Sigmoid colon (tissue), 7 donors: ENCODE measurements at regions of chr6 and their contacts with region 1.

Region 1: GRCh38 chr6:24494821-24495795 is at the start of gene ALDH5A1:
- DNase-seq: peak; percentile 83
- H3K4me3 ChIP-seq: peak within 1 kb of the TSS; percentile 53 to 67 (median 66)
- H3K27ac ChIP-seq: peak within 1 kb of the TSS; percentile 82 to 89 (median 85)
- H3K4me1 ChIP-seq: peaks cover 0 to 19% (median 12%) of the 10 kb centered on the region in 4 donors
- H3K27me3 ChIP-seq: no peaks in the 10 kb centered on the region
- CTCF ChIP-seq: peak in 2 of 4 experiments; percentile 6 to 18
- EP300 ChIP-seq: no peak
- POLR2A ChIP-seq: no peak
- total RNA-seq, gene ALDH5A1: 2.6 to 5.0 (median 2.9) TPM

Region 2: GRCh38 chr6:24666641-24667377 is 171.7 kb after region 1 on chr6 and contains the starts of genes ACOT13 and TDP2:
- intact Hi-C with region 1: loop called (anchors 10 kb)
- DNase-seq: peak; percentile 98
- H3K4me3 ChIP-seq: peak within 1 kb of the TSS; percentile 76 to 97 (median 80)
- H3K27ac ChIP-seq: peak within 1 kb of the TSS; percentile 88 to 92 (median 92)
- H3K4me1 ChIP-seq: peaks cover 0 to 32% (median 26%) of the 10 kb centered on the region in 4 donors
- H3K27me3 ChIP-seq: no peaks in the 10 kb centered on the region
- CTCF ChIP-seq: peak; percentile 42 to 63 (median 52)
- EP300 ChIP-seq: no peak
- POLR2A ChIP-seq: peak; percentile 74 to 88
- total RNA-seq, gene ACOT13: 5.3 to 11.8 (median 9.2) TPM
- total RNA-seq, gene TDP2: 30.4 to 67.6 (median 48.2) TPM

Region 3: DNA sequence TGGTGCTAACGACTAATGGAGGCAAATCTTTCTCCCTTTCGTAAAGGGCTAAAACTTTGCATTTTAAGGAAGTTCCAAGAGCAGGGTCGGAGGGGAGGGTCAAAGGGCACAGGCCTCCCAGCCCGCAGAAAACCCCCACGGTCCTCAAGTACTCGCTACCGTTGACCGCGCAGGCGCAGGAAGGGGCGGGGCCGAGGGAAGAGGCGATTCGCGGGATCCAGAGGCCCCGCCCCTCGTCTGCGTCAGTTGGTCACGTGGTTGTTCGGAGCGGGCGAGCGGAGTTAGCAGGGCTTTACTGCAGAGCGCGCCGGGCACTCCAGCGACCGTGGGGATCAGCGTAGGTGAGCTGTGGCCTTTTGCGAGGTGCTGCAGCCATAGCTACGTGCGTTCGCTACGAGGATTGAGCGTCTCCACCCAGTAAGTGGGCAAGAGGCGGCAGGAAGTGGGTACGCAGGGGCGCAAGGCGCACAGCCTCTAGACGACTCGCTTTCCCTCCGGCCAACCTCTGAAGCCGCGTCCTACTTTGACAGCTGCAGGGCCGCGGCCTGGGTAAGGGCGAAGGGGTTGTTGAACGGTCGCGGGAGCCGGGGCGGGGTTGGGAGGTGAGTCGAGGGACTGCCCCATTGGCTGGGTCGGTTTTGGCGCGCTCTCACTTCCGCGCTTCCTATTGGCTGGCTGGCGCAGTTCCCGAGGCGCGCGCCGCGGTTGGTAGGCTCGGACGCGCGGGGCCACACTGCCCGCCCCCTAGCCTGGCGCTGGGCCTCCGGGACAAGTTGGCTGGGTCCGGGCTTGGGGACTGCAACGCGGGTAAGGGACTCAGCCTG is 279.8 kb after region 1 on chr6 and contains the start of gene GMNN:
- intact Hi-C with region 1: loop called (anchors 10 kb)
- DNase-seq: peak; percentile 99
- H3K4me3 ChIP-seq: peak within 1 kb of the TSS; percentile 86 to 99 (median 97)
- H3K27ac ChIP-seq: peak within 1 kb of the TSS; percentile 93 to 99 (median 98)
- H3K4me1 ChIP-seq: peaks cover 0 to 19% (median 5%) of the 10 kb centered on the region in 4 donors
- H3K27me3 ChIP-seq: no peaks in the 10 kb centered on the region
- CTCF ChIP-seq: no peak
- EP300 ChIP-seq: no peak
- POLR2A ChIP-seq: peak; percentile 27 to 59
- total RNA-seq, gene GMNN: 4.4 to 9.7 (median 8.2) TPM